ENCODE measurements at regions of chr10 and their contacts with region 1.

Region 1: GRCh38 chr10:92573798-92574547 is at the start of gene IDE:
- DNase-seq: peak; percentile 89
- ATAC-seq: peak; percentile 80
- H3K4me3 ChIP-seq: peak within 1 kb of the TSS; percentile 50 to 94 (median 90)
- H3K4me3 Mint-ChIP-seq: peak within 1 kb of the TSS; percentile 91
- H3K27ac ChIP-seq: peak within 1 kb of the TSS; percentile 70 to 80
- H3K27ac Mint-ChIP-seq: peak within 1 kb of the TSS; percentile 87
- H3K4me1 ChIP-seq: peaks cover 16 to 20% of the 10 kb centered on the region in 2 donors
- H3K4me1 Mint-ChIP-seq: peaks cover 35% of the 10 kb centered on the region
- H3K27me3 ChIP-seq: no peaks in the 10 kb centered on the region
- H3K27me3 Mint-ChIP-seq: no peaks in the 10 kb centered on the region
- CTCF ChIP-seq: peak; percentile 86
- total RNA-seq, gene IDE: 38.5 and 40.9 TPM in 2 replicates

Region 2: DNA sequence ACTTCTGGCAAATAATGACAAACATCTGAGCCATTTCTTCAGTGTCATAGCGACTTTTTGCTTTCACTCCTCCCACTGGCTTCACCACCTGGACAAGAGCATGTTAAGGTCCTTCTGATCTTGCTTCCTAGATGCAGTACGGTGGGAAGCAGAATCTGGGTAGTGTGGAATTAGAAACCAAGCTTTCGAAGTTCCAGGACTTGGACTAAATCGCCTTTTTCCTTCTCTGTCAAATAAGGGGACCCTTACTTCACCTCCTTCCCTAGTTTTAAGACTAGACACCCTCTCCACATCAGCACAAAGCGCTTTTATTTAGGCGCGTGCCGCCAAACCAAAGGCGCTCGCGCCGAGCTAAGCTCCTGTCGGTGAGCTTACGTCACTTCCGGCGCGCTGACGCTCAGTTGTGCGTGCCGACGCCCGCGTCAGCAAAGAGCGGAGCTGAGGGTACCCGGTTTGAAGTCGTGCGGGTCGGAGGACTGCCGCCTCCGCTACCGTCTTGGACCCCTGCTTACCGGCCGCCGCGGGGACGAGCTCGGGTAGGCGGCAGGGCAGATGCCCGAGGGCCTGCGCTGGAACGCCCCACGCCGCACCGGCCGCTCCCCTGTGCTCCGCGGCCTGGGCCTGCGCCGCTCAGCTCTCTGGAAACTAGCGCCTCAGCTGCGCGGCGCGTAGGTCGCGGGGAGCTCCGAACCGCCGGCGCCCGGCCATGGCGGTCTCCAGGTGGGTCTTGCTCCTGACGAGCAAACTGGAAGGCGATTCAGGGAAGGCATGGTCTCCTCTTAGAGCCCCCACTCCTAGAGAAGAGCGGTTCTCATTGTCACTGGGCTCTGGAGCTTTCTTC is 650.4 kb before region 1 on chr10 and contains the start of gene BTAF1:
- CTCF ChIA-PET with region 1: no interaction called
- POLR2A ChIA-PET with region 1: no interaction called
- intact Hi-C with region 1: loop called (anchors 10 kb)
- DNase-seq: peak; percentile 96
- ATAC-seq: peak; percentile 93
- H3K4me3 ChIP-seq: peak within 1 kb of the TSS; percentile 88 to 98 (median 93)
- H3K4me3 Mint-ChIP-seq: peak within 1 kb of the TSS; percentile 86
- H3K27ac ChIP-seq: peak within 1 kb of the TSS; percentile 93 to 99
- H3K27ac Mint-ChIP-seq: peak within 1 kb of the TSS; percentile 100
- H3K4me1 ChIP-seq: peaks cover 18 to 20% of the 10 kb centered on the region in 2 donors
- H3K4me1 Mint-ChIP-seq: peaks cover 39% of the 10 kb centered on the region
- H3K27me3 ChIP-seq: peaks cover 0 to 4% (median 2%) of the 10 kb centered on the region in 4 experiments
- H3K27me3 Mint-ChIP-seq: peaks cover 3% of the 10 kb centered on the region
- CTCF ChIP-seq: no peak
- total RNA-seq, gene BTAF1: 78.1 and 81.7 TPM in 2 replicates

Region 3: DNA sequence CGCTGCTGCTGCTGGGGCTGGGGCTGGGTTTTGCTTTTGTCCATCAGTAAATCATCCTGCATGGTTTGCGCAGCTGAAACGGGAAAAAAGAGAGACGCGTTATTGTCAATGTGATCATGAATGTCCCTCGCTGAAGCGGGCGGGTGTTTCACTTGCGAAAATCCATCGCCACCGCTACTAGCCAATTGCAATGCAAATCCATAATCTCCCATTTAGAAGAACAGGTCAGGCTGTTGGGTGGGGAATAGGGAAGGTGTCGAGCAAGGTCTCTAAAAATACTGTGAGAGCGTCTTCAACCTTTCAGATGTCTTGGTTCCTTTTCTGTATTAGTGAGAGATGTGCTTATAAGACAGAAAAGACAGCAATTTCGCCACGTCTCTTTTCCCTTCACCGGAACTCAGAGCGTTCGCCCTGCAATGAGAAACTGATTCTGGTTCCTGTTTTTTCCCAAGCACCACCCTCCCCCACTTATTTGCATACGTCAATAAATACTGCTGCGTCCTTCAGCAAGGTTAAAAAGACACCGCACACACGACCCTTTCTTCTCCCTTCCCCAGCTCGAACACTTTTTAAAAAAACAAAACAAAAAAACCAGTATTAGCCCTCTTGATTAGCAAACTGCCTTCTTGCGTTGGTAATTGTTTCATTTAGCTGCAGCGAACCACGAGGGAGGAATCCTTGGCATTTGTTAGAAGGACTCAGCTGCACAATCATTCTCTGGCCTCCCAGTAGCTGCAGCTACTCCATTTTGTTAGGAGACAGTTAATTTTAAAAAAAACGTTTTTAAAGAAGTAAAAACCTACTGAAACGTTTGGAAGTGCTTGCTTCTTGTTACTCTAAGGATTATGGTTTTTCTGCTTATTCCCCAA is 333.4 kb before region 1 on chr10:
- CTCF ChIA-PET with region 1: no interaction called
- POLR2A ChIA-PET with region 1: no interaction called
- intact Hi-C with region 1: loop called (anchors 2 kb)
- DNase-seq: peak; percentile 83
- ATAC-seq: peak; percentile 72
- H3K4me3 ChIP-seq: peak overlapping the region; percentile 63 to 99 (median 91)
- H3K4me3 Mint-ChIP-seq: peak overlapping the region; percentile 96
- H3K27ac ChIP-seq: peak overlapping the region; percentile 7 to 37
- H3K27ac Mint-ChIP-seq: peak overlapping the region; percentile 93
- H3K4me1 ChIP-seq: peaks cover 19 to 30% of the 10 kb centered on the region in 2 donors
- H3K4me1 Mint-ChIP-seq: peaks cover 47% of the 10 kb centered on the region
- H3K27me3 ChIP-seq: no peaks in the 10 kb centered on the region
- H3K27me3 Mint-ChIP-seq: no peaks in the 10 kb centered on the region
- CTCF ChIP-seq: no peak

Region 4: GRCh38 chr10:92517034-92517655 is 56.8 kb before region 1 on chr10:
- CTCF ChIA-PET with region 1: interaction called, 154 read pairs
- POLR2A ChIA-PET with region 1: interaction called, 7 read pairs
- intact Hi-C with region 1: loop called (anchors 1 kb)
- DNase-seq: peak; percentile 84
- ATAC-seq: peak; percentile 88
- H3K4me3 ChIP-seq: no peak overlapping the region
- H3K4me3 Mint-ChIP-seq: no peak overlapping the region
- H3K27ac ChIP-seq: no peak overlapping the region
- H3K27ac Mint-ChIP-seq: no peak overlapping the region
- H3K4me1 ChIP-seq: no peaks in the 10 kb centered on the region
- H3K4me1 Mint-ChIP-seq: no peaks in the 10 kb centered on the region
- H3K27me3 ChIP-seq: no peaks in the 10 kb centered on the region
- H3K27me3 Mint-ChIP-seq: no peaks in the 10 kb centered on the region
- CTCF ChIP-seq: peak; percentile 82

Region 5: DNA sequence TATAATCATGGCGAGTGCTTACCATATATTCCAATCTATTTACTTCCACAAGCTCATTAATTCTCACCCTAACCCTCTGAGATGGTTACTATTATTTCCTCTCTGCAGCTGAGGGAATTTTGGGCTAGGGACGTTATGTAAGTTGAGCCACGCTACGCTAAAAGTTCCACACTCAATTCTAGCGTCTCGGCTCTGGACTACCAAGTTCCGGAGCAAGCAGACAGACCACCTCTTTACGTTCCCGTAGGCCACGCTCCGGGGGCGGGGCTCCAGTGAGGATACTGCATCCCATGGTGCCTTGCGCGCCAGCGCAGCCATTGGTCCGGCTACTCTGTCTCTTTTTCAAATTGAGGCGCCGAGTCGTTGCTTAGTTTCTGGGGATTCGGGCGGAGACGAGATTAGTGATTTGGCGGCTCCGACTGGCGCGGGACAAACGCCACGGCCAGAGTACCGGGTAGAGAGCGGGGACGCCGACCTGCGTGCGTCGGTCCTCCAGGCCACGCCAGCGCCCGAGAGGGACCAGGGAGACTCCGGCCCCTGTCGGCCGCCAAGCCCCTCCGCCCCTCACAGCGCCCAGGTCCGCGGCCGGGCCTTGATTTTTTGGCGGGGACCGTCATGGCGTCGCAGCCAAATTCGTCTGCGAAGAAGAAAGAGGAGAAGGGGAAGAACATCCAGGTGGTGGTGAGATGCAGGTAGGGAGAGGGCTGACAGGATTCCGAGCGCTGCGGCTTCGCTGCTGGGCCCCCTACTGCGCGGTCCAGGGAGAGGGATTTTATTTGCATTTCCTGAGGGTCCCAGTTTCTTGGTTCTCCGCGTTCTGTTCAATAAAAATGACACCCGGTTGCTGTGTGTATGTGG is 19.0 kb after region 1 on chr10 and contains the start of gene KIF11:
- CTCF ChIA-PET with region 1: interaction called, 40 read pairs
- POLR2A ChIA-PET with region 1: interaction called, 16 read pairs
- intact Hi-C with region 1: loop called (anchors 1 kb)
- DNase-seq: peak; percentile 96
- ATAC-seq: peak; percentile 82
- H3K4me3 ChIP-seq: peak within 1 kb of the TSS; percentile 65 to 95 (median 84)
- H3K4me3 Mint-ChIP-seq: peak within 1 kb of the TSS; percentile 99
- H3K27ac ChIP-seq: peak within 1 kb of the TSS; percentile 82 to 92
- H3K27ac Mint-ChIP-seq: peak within 1 kb of the TSS; percentile 99
- H3K4me1 ChIP-seq: peaks cover 9 to 22% of the 10 kb centered on the region in 2 donors
- H3K4me1 Mint-ChIP-seq: peaks cover 41% of the 10 kb centered on the region
- H3K27me3 ChIP-seq: no peaks in the 10 kb centered on the region
- H3K27me3 Mint-ChIP-seq: no peaks in the 10 kb centered on the region
- CTCF ChIP-seq: no peak
- total RNA-seq, gene KIF11: 1.8 and 2.0 TPM in 2 replicates

Measured in B cell (primary cell).